WTC11 (cell line): ENCODE measurements at regions of chr4 and their contacts with region 1.

Region 1: GRCh38 chr4:154911097-154911496 is 130.0 kb downstream of the RBM46 start:
- DNase-seq: no peak
- ATAC-seq: peak; percentile 70
- H3K4me3 Mint-ChIP-seq: no peak overlapping the region
- H3K27ac Mint-ChIP-seq: no peak overlapping the region
- H3K4me1 Mint-ChIP-seq: peaks cover 37% of the 10 kb centered on the region
- H3K27me3 Mint-ChIP-seq: no peaks in the 10 kb centered on the region
- CTCF ChIP-seq: no peak

Region 2: DNA sequence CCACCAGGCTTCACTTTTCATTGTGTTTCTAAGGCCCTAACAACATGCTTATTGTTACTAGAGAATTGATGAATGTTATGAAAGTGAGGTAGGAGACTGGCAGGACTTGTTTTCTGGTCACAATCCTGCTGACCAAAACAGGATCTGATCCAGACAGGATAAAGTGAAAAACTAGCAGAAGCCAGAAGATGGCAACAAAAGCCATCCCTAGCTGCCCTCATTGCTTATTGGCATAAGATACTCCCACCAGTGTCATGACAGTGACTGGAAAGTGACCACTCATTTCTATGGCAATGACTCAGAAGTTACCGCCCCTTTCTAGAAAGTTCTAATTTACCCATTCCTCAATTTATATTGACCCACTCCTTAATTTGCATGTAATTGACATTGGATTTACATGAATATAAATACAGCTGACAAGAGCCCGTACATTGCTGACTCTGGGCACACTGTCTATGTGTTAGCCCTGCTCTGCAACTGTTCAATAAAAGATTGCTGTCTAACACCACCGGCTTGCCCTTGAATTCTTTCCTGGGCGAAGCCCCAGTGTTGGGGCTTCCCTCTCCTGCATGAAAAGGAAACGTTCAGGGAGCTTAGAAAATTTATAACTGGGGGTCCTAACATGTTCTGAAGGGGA is 268.6 kb before region 1 on chr4:
- CTCF ChIA-PET with region 1: interaction called, 14 read pairs
- POLR2A ChIA-PET with region 1: no interaction called
- DNase-seq: no peak
- ATAC-seq: peak; percentile 82
- H3K4me3 Mint-ChIP-seq: no peak overlapping the region
- H3K27ac Mint-ChIP-seq: no peak overlapping the region
- H3K4me1 Mint-ChIP-seq: peaks cover 12% of the 10 kb centered on the region
- H3K27me3 Mint-ChIP-seq: no peaks in the 10 kb centered on the region
- CTCF ChIP-seq: no peak

Region 3: GRCh38 chr4:154779362-154779947 is 131.6 kb before region 1 on chr4:
- CTCF ChIA-PET with region 1: no interaction called
- POLR2A ChIA-PET with region 1: no interaction called
- DNase-seq: no peak
- ATAC-seq: peak; percentile 44
- H3K4me3 Mint-ChIP-seq: no peak overlapping the region
- H3K27ac Mint-ChIP-seq: no peak overlapping the region
- H3K4me1 Mint-ChIP-seq: peaks cover 19% of the 10 kb centered on the region
- H3K27me3 Mint-ChIP-seq: no peaks in the 10 kb centered on the region
- CTCF ChIP-seq: peak; percentile 59

Region 4: DNA sequence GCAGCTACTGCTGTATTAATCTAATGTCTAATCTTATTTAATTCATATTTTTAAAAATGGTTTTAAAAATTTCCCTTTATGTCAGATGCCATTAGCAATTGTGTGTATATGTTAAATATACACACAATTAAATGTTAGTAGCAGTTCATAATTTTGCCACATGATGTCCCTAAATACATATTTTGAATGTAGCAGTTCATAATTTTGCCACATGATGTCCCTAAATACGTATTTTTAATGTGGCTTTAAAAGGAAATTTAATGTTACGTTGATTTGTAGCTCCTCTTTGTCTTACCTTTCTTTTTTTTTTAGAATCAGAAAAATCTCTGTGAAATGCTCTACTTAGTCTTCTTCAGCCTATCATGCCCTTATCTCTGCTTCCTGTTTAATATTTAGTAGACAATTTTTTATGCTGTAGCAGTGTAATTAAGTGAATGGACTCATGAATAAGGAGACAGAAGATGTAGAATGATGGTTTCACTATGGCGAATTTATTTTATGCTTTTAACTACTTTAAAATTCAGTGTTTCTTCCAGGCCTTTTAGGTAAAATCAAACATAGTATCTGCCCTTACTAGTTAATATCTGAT is 104.0 kb before region 1 on chr4:
- CTCF ChIA-PET with region 1: interaction called, 14 read pairs
- POLR2A ChIA-PET with region 1: no interaction called
- DNase-seq: no peak
- ATAC-seq: no peak
- H3K4me3 Mint-ChIP-seq: no peak overlapping the region
- H3K27ac Mint-ChIP-seq: no peak overlapping the region
- H3K4me1 Mint-ChIP-seq: no peaks in the 10 kb centered on the region
- H3K27me3 Mint-ChIP-seq: no peaks in the 10 kb centered on the region
- CTCF ChIP-seq: no peak; the same call in 1 of the 2 replicates

Region 5: GRCh38 chr4:154942176-154942575 is 31.1 kb after region 1 on chr4:
- CTCF ChIA-PET with region 1: no interaction called
- POLR2A ChIA-PET with region 1: no interaction called
- DNase-seq: no peak
- ATAC-seq: no peak
- H3K4me3 Mint-ChIP-seq: no peak overlapping the region
- H3K27ac Mint-ChIP-seq: no peak overlapping the region
- H3K4me1 Mint-ChIP-seq: no peaks in the 10 kb centered on the region
- H3K27me3 Mint-ChIP-seq: no peaks in the 10 kb centered on the region
- CTCF ChIP-seq: no peak

Region 6: DNA sequence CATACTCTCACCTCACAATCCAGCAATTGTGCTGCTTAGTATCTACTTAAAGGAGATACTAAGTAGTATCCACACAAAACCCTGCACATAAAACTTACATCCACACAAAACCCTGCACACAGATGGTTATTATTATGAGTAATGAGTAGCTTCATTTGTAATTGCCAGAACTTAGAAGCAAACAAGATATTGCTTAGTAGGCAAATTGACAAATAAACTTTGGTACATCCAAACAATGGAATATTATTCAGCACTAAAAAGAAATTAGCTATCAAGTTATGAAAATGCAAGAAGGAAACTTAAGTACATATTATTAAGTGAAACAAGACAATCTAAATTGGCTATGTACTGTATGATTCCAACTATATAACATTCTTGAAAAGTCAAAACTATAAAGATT is 377.9 kb after region 1 on chr4:
- CTCF ChIA-PET with region 1: no interaction called
- POLR2A ChIA-PET with region 1: no interaction called
- DNase-seq: no peak
- ATAC-seq: no peak
- H3K4me3 Mint-ChIP-seq: no peak overlapping the region
- H3K27ac Mint-ChIP-seq: no peak overlapping the region
- H3K4me1 Mint-ChIP-seq: peaks cover 17% of the 10 kb centered on the region
- H3K27me3 Mint-ChIP-seq: no peaks in the 10 kb centered on the region; the same call in 1 of the 2 replicates
- CTCF ChIP-seq: no peak